ENCODE measurements at regions of chr3 and their contacts with region 1.

Region 1: GRCh38 chr3:120795017-120795648 is 52.6 kb downstream of the GTF2E1 start:
- DNase-seq: peak; percentile 88
- ATAC-seq: peak; percentile 92

Region 2: GRCh38 chr3:120239644-120240043 is 555.5 kb before region 1 on chr3:
- intact Hi-C with region 1: loop called (anchors 5 kb)
- DNase-seq: no peak
- ATAC-seq: no peak

Region 3: GRCh38 chr3:120399372-120399771 is 395.8 kb before region 1 on chr3:
- intact Hi-C with region 1: loop called (anchors 10 kb)
- DNase-seq: no peak
- ATAC-seq: no peak

Region 4: DNA sequence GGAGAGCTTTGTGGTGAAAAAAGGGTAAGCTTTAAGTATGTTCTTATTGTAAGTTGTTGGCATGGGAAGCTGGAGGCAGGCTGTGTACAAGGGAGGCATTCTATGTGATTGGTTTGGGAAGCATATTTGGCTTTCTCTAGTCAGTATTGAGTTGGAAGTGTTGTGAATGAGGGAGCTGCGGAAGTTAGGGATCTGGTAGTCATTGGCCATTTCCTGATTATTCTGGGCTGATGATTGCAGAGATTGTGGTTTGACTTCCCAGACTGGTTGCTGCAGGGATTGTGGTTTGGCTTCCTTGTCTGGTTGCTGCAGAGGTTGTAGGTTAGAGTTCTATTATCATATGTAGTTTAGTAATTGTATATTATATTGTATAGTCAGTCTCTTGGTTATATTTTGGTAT is 133.9 kb after region 1 on chr3:
- intact Hi-C with region 1: no loop called
- DNase-seq: no peak
- ATAC-seq: no peak

Measured in Right ventricle myocardium superior (tissue), 1 donor.